Activated B cell treated with CpG ODN at 0.5 μM for 24 hours (primary cell): ENCODE measurements at regions of chr9 and their contacts with region 1.

Region 1: GRCh38 chr9:137881591-137882505 is 4.3 kb downstream of the CACNA1B start:
- DNase-seq: no peak
- ATAC-seq: no peak
- H3K4me3 Mint-ChIP-seq: no peak overlapping the region
- H3K27ac Mint-ChIP-seq: no peak overlapping the region
- H3K4me1 Mint-ChIP-seq: no peaks in the 10 kb centered on the region
- H3K27me3 Mint-ChIP-seq: peaks cover 14% of the 10 kb centered on the region
- CTCF ChIP-seq: no peak

Region 2: DNA sequence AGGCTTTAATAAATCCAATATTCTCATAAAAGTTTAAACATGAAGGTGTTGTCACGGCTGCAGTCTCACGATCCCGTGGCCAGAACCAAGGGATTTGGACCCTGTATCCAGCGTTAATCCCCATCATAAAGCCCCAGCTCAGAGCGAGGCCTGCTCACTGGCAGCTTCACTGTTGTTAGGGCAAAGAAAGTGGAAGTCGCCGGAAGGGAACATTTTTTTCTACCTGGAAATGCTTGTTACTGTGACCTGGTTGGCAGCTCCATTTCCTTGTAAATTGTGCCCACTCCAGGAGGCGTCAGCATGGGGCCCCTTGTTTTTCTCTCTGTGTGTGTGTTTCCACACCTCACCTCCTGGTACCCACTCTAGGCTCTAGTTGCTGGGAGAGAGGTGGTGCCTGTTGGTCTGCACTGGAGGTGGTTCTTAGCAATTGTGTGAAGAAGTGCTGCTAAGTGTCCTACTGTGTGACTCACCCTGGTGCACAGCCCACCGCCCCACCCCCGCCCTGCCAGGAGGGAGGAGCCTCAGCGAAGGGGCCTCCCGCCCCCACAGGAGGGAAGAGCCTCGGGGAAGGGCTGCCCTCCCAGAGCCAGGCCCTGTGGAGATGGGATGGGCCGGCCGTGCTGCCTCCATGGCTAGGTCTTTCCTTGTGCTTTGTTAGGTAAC is 157.9 kb before region 1 on chr9:
- CTCF ChIA-PET with region 1: no interaction called
- POLR2A ChIA-PET with region 1: no interaction called
- intact Hi-C with region 1: no loop called
- DNase-seq: no peak
- ATAC-seq: no peak
- H3K4me3 Mint-ChIP-seq: no peak overlapping the region
- H3K27ac Mint-ChIP-seq: peak overlapping the region; percentile 91
- H3K4me1 Mint-ChIP-seq: peaks cover 37% of the 10 kb centered on the region
- H3K27me3 Mint-ChIP-seq: no peaks in the 10 kb centered on the region
- CTCF ChIP-seq: no peak

Region 3: DNA sequence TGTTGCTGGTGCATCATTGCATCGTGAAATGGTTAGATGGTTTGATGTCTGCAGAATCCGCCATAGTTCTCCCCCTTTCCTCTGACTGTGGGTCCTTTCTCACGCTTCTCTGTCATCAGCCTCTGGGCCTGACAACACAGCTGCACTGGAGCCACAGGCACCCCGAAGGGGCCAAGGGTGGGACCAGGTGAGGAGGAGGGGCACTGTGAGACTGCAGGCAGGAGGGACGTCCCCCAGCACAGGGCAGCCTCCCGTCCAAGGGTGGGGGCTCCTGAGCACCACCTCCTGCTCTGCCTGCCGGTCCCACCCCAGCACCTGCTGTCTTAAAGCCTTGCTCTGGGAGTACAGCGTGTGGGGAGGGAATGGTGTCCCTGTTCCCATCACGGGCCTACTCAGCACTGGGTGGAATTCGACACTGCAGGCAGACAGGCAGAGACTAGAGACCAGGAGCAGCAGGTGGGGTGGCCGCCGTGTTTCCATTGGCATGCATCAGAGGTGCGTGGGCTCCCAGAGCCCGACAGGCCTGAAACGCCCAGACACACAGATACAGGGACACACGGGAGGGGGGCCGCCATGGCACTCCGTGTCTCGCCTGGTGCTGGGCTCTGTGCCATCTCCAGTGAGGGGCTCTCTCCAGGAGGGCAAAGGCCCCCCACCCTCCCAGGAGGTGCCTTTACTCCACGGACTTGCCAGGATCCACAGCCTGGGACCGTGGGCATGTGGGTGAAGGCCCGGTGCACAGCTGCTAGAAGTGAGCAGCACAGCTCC is 10.8 kb after region 1 on chr9:
- CTCF ChIA-PET with region 1: no interaction called
- POLR2A ChIA-PET with region 1: interaction called, 11 read pairs
- intact Hi-C with region 1: no loop called
- DNase-seq: no peak
- ATAC-seq: no peak
- H3K4me3 Mint-ChIP-seq: no peak overlapping the region
- H3K27ac Mint-ChIP-seq: no peak overlapping the region
- H3K4me1 Mint-ChIP-seq: no peaks in the 10 kb centered on the region
- H3K27me3 Mint-ChIP-seq: no peaks in the 10 kb centered on the region
- CTCF ChIP-seq: no peak